ENCODE measurements at regions of chr6 and their contacts with region 1.

Region 1: DNA sequence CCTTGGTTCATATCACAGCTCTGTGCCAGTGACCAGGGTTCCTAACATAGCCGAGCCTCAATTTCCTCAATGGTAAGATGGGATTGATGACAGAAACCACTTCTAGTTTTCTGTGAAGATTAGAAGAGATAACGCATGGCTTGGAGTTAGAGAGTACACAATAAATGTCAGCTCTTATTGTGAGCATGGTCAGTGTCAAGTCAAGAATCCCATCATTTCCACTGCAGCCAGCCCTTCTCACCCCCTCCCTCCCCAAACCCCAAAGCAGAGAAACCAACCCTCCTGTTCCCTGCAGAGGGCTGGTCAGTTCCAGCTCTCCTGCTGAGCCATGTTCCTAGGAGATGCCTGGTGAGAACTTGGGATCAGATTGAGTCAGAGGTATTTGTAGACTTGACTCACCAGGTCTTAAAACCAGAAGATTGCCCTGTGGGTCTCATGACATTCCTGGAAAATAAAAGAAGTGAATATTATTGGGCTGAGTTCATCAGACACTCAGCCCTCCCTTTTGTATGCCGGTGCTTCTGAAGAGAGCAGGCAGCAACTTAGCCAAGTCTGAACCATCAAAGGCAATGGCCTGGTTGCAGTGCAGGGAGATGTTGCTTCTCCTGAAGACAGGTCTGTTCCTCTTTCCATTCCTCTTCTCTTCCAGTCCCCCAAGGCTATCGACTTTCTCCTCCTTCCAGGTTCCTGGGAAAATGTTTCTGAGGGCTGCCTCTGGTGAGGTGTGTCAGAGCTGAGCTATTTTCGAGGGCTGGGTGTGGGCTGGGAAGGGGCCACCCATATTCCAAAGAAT is 278.1 kb upstream of the SUPT3H start:
- DNase-seq: peak; percentile 98
- H3K4me3 ChIP-seq: no peak overlapping the region
- H3K27ac ChIP-seq: peak overlapping the region; percentile 76
- H3K4me1 ChIP-seq: peaks cover 53% of the 10 kb centered on the region
- H3K27me3 ChIP-seq: no peaks in the 10 kb centered on the region
- CTCF ChIP-seq: no peak

Region 2: DNA sequence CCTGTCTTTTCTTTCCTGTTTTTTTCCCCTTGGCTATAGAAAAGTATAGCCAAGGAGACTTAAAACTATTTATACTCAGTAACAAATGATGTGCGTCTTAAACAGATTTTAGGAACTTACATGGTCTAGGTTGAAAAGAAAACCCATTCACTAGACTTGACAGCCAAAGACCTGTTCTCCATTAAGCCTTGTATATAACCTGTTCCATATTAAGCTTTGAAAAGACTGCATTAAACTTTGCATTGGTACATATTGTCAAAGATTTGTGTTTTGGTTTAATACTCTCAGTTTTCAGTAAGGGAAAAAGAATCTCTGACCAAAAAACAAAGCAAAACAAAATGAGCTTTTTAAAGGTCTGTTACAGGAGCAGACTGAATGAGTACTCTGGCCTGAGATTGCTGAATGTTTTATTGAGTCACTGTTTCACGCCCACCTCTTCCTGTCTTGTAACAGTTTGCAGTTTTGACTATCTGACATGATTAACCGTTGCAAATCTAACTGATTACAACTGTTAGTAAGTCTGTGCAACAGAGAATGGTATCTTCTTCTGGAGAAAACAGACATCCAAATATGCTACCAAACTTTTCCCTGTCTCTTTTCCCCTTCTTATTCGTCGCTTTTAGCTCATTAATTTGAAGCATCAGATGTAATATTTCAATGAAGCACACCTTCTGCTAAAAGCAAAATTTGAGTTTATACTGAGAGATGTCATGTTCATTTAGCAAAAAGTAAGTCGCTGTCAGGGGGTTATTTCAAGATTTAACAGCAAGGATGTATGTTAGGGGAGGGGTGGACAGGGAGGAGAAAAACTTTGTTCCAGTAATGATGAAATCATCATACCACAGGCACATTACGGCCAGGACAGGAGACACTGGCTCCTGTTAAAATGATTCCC is 219.0 kb before region 1 on chr6:
- CTCF ChIA-PET with region 1: no interaction called
- dilution Hi-C with region 1: no loop called
- in situ Hi-C with region 1: no loop called
- intact Hi-C with region 1: loop called (anchors 5 kb)
- DNase-seq: peak; percentile 78
- H3K4me3 ChIP-seq: peak overlapping the region in 2 of 3 experiments; percentile 7 to 9
- H3K27ac ChIP-seq: peak overlapping the region; percentile 46
- H3K4me1 ChIP-seq: peaks cover 50% of the 10 kb centered on the region
- H3K27me3 ChIP-seq: no peaks in the 10 kb centered on the region
- CTCF ChIP-seq: no peak

Region 3: DNA sequence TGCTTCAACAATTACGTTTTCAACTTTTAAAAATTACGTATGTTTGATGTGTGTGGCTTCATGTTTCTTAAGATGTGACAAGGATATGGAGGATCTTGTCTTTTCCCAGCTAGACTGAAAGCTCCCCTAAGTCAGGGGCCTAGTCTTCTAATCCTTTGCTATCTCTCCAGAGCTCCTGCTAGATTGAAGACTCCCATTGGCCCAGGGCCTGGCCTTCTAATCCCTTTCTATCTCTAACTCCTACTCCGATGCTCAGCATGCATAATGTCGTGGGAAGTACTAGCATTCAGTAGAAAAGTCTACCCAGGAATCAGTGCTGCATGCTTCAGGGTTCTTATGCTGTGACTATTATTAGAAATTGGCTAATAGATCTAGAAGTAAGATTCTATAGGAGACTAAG is 133.3 kb before region 1 on chr6:
- CTCF ChIA-PET with region 1: no interaction called
- dilution Hi-C with region 1: no loop called
- in situ Hi-C with region 1: no loop called
- intact Hi-C with region 1: no loop called
- DNase-seq: no peak
- H3K4me3 ChIP-seq: no peak overlapping the region
- H3K27ac ChIP-seq: no peak overlapping the region
- H3K4me1 ChIP-seq: no peaks in the 10 kb centered on the region
- H3K27me3 ChIP-seq: no peaks in the 10 kb centered on the region
- CTCF ChIP-seq: no peak

Region 4: GRCh38 chr6:45613656-45614055 is 42.2 kb before region 1 on chr6:
- CTCF ChIA-PET with region 1: no interaction called
- dilution Hi-C with region 1: no loop called
- in situ Hi-C with region 1: no loop called
- intact Hi-C with region 1: loop called (anchors 1 kb)
- DNase-seq: peak; percentile 96
- H3K4me3 ChIP-seq: no peak overlapping the region
- H3K27ac ChIP-seq: peak overlapping the region; percentile 23
- H3K4me1 ChIP-seq: peaks cover 31% of the 10 kb centered on the region
- H3K27me3 ChIP-seq: no peaks in the 10 kb centered on the region
- CTCF ChIP-seq: peak in 1 of 2 donors; percentile 28

Region 5: DNA sequence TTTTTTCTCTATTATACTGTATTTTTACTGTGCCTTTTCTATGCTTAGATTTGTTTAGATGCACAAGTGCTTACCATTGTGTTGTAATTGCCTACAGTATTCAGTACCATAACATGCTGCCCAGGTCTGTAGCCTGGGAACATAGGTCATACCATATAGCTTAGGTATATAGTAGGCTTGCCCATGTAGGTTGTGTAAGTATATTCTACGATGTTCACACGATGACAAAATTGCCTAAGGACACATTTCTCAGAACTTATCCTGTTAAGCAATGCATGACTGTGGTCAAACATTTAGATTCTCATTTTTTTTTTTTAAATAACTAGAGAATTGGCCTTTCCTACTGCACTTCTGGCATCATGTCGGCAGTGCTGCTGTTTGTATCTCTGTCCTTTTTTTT is 24.4 kb before region 1 on chr6:
- CTCF ChIA-PET with region 1: no interaction called
- dilution Hi-C with region 1: no loop called
- in situ Hi-C with region 1: no loop called
- intact Hi-C with region 1: loop called (anchors 2 kb)
- DNase-seq: peak; percentile 64
- H3K4me3 ChIP-seq: no peak overlapping the region
- H3K27ac ChIP-seq: no peak overlapping the region
- H3K4me1 ChIP-seq: peaks cover 18% of the 10 kb centered on the region
- H3K27me3 ChIP-seq: no peaks in the 10 kb centered on the region
- CTCF ChIP-seq: no peak

Region 6: GRCh38 chr6:45697605-45698004 is 41.8 kb after region 1 on chr6:
- CTCF ChIA-PET with region 1: no interaction called
- dilution Hi-C with region 1: no loop called
- in situ Hi-C with region 1: no loop called
- intact Hi-C with region 1: loop called (anchors 2 kb)
- DNase-seq: peak; percentile 94
- H3K4me3 ChIP-seq: no peak overlapping the region
- H3K27ac ChIP-seq: peak overlapping the region; percentile 75
- H3K4me1 ChIP-seq: peaks cover 23% of the 10 kb centered on the region
- H3K27me3 ChIP-seq: no peaks in the 10 kb centered on the region
- CTCF ChIP-seq: no peak

Region 7: DNA sequence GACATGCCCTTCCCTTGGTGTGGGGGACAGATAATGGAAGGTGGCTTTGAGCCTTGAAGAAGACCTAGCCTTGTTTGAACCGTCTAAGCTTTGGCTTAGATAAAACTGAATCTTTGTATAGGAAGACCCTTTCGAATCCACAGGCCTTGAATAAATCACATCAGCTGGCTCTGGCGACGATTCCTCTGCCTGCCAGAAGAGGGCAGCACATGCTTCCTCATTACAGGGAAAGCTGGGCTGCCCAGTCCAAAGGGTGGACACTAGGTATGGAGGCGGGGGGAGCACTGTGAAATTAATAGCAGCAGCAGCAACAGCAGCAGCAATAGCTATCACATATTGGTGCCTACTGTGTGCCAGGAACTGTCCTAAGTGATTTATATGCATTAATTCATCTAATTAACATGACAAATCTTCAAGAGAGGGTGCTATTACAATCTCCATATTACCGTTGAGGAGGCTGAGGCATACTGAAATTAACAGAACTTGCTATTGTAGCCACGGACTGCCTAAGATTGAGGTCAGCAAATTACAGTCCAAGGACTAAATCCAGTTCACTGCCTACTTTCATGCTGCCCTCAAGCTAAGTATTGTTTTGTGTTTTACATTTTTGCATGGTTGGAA is 274.7 kb after region 1 on chr6:
- CTCF ChIA-PET with region 1: no interaction called
- dilution Hi-C with region 1: no loop called
- in situ Hi-C with region 1: no loop called
- intact Hi-C with region 1: no loop called
- DNase-seq: peak; percentile 32
- H3K4me3 ChIP-seq: no peak overlapping the region
- H3K27ac ChIP-seq: no peak overlapping the region
- H3K4me1 ChIP-seq: no peaks in the 10 kb centered on the region
- H3K27me3 ChIP-seq: no peaks in the 10 kb centered on the region
- CTCF ChIP-seq: peak; percentile 97 to 98

Measured in mammary epithelial cell (primary cell).